OCI-LY7 (cell line): ENCODE measurements at regions of chr2 and their contacts with region 1.

Region 1: DNA sequence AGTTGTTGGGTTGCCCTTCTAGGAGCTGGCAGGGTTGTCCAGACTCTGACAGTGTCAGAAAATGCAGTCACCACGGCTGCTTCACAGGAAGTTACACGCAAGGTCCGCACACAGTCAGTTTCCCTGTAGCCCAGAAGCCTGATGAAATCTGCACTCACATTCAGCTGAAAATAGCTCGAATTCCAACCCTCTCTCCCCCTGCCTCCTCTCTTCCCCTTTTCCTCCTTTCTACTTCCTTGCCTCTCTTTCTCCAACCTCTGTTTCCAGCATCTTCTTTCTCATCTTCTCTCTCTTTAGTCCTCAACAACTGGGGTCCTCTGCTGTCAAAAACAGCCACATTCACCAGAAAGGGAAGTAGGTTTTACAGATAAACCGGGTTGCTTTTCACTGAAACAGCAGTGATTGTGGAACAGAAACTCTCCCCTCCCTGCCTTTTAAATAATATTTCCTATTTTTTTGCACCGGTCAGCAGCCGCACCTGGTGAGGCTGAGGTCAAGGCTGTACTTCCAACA is 69.3 kb downstream of the BCL11A start:
- DNase-seq: peak; percentile 80
- H3K4me3 ChIP-seq: peak overlapping the region; percentile 51
- H3K27ac ChIP-seq: peak overlapping the region; percentile 82
- H3K4me1 ChIP-seq: peaks cover 45% of the 10 kb centered on the region
- CTCF ChIP-seq: peak; percentile 26; the same call in 1 of the 2 replicates

Region 2: DNA sequence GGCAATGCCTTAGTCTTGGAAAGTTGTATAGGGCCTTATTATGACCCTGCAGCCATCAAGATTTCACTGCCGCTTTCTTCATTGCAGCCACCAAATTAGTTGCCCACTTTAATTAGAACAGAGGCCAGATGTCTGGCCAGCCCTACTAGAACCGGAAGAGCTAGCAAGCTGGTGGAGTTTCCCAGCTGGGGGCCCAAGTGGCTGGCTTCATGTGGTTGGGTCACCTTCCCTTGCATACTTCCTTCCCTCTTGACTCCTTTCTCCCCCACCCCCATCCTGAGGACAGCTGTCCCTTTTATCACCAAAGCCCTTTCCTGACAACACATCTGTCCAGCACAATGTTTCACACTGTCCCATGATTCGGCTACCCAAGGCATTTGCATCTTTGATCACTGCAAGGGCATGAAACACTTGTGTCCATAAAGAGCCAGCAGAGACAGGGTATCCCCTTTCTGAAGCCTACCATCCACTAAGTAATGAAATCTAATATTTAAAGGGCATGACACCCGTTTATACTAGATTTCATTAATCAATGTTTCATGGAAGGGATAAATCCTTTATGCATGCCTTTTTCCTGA is 118.0 kb before region 1 on chr2:
- CTCF ChIA-PET with region 1: no interaction called
- POLR2A ChIA-PET with region 1: no interaction called
- intact Hi-C with region 1: loop called (anchors 5 kb)
- DNase-seq: peak; percentile 89
- H3K4me3 ChIP-seq: peak overlapping the region; percentile 35
- H3K27ac ChIP-seq: peak overlapping the region; percentile 85
- H3K4me1 ChIP-seq: peaks cover 100% of the 10 kb centered on the region
- CTCF ChIP-seq: no peak

Region 3: DNA sequence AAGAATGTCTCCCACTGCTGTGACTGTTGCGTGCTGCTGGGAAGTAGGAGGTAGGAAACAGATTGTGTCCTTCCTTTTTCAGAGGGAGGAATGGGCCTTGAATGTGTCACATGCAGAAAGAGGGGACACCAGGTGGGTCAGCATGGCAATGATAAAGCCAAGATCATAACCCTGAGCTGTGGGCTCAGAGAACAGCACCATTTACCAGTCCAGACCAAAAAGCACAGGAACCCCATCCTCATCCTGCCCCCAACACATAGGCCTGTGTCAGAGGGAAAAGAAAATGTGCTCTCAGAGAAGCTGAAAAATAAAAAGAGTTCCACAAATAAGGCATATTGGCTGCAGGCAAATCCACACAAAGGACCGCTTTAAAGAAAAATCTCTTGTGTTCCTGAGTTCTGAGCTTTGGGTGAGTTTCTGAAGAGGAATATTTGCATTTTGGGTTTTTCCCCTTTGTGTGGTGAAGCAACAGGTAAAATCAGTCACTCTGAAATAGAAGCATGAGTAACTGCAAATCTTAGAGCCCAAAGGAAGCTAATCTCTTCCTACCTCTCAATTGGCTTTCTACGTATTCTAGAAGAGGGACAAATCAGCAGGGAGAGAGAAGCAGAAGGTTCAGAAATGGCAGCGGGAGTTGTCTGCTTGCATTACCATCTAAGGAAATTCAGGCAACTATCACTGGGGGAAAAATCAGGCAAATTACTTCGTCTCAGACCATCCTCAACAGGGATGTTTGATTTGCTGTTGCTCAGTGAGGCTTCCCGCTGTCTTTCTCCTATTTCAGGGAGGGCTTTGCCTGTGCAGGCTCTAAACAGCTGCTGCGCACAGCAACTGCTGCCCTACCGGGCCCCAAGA is 37.5 kb before region 1 on chr2:
- CTCF ChIA-PET with region 1: no interaction called
- POLR2A ChIA-PET with region 1: interaction called, 3 read pairs
- intact Hi-C with region 1: loop called (anchors 2 kb)
- DNase-seq: peak; percentile 72
- H3K4me3 ChIP-seq: peak overlapping the region; percentile 36
- H3K27ac ChIP-seq: peak overlapping the region; percentile 80
- H3K4me1 ChIP-seq: peaks cover 73% of the 10 kb centered on the region
- CTCF ChIP-seq: no peak

Region 4: GRCh38 chr2:60456115-60456770 is 27.9 kb before region 1 on chr2:
- CTCF ChIA-PET with region 1: no interaction called
- POLR2A ChIA-PET with region 1: interaction called, 13 read pairs
- intact Hi-C with region 1: no loop called
- DNase-seq: no peak
- H3K4me3 ChIP-seq: no peak overlapping the region
- H3K27ac ChIP-seq: no peak overlapping the region
- H3K4me1 ChIP-seq: peaks cover 7% of the 10 kb centered on the region
- CTCF ChIP-seq: peak; percentile 61

Region 5: GRCh38 chr2:60495041-60495625 is 10.9 kb after region 1 on chr2:
- CTCF ChIA-PET with region 1: no interaction called
- POLR2A ChIA-PET with region 1: interaction called, 11 read pairs
- intact Hi-C with region 1: no loop called
- DNase-seq: no peak
- H3K4me3 ChIP-seq: no peak overlapping the region
- H3K27ac ChIP-seq: no peak overlapping the region
- H3K4me1 ChIP-seq: peaks cover 34% of the 10 kb centered on the region
- CTCF ChIP-seq: no peak

Region 6: GRCh38 chr2:60544062-60544461 is 59.9 kb after region 1 on chr2:
- CTCF ChIA-PET with region 1: no interaction called
- POLR2A ChIA-PET with region 1: interaction called, 11 read pairs
- intact Hi-C with region 1: no loop called
- DNase-seq: no peak
- H3K4me3 ChIP-seq: peak overlapping the region; percentile 93
- H3K27ac ChIP-seq: peak overlapping the region; percentile 90
- H3K4me1 ChIP-seq: peaks cover 81% of the 10 kb centered on the region
- CTCF ChIP-seq: no peak